ENCODE measurements at regions of chr7 and their contacts with region 1.

Region 1: GRCh38 chr7:16982640-16983350 is 101.0 kb upstream of the AGR3 start:
- DNase-seq: no peak
- ATAC-seq: peak; percentile 44 to 47

Region 2: GRCh38 chr7:17275749-17276671 is 293.2 kb after region 1 on chr7:
- intact Hi-C with region 1: no loop called
- DNase-seq: no peak
- ATAC-seq: peak; percentile 85 to 98

Region 3: DNA sequence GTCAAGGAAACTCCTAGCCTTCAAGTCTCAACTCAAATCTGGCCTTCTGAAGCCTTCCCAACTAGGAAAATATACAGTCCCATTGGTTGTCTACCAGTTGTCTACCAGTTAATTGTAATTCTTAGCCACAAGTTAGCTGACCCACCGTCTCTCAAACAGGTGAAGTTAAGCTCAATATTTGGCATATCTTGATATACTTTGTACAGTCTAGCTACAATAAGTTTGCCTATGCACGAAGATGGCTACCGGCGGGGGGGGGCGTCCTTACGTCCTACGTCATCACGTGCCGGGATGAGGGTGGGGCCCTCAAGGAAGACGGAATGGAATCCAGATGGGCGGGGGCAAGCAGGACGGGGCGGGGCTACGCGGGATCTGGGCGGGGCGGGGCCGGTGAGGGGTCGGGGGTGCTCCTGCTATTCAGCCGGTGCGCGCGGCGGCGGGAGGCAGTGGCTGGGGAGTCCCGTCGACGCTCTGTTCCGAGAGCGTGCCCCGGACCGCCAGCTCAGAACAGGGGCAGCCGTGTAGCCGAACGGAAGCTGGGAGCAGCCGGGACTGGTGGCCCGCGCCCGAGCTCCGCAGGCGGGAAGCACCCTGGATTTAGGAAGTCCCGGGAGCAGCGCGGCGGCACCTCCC is 315.5 kb after region 1 on chr7 and contains the start of gene AHR:
- intact Hi-C with region 1: loop called in 1 of 2 experiments (anchors 2 kb)
- DNase-seq: peak; percentile 95
- ATAC-seq: peak; percentile 97
- total RNA-seq, gene AHR: 26.4 to 30.2 TPM

Region 4: GRCh38 chr7:17646253-17646956 is 663.6 kb after region 1 on chr7:
- intact Hi-C with region 1: loop called in 1 of 2 experiments (anchors 5 kb)
- DNase-seq: no peak
- ATAC-seq: no peak